ENCODE measurements at regions of chr17 and their contacts with region 1.

Region 1: DNA sequence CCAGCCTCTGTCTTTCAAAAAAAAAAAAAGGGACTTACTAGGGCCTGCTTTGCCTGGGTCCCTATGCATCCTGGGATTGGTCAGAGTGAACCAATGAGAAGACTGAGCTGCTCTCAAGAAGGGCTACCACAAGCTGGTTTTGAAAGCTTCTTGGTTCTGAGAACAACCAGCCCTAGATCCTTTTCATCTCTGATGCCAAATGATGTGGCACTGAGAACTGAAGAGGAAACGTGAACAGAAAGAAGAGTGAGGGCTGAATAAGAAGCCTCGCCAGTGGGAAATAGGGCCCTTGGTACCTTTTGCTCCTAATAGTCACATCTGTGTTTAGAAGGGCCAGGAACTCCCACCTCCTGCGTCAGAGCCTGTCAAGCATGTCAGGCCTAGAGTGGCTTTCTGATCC is 10.7 kb downstream of the TACO1 start:
- DNase-seq: no peak
- CTCF ChIP-seq: no peak

Region 2: GRCh38 chr17:63434876-63435684 is 176.3 kb before region 1 on chr17:
- in situ Hi-C with region 1: loop called (anchors 5 kb)
- DNase-seq: no peak
- CTCF ChIP-seq: no peak

Measured in GM13976 (cell line).